Panc1 (cell line): ENCODE measurements at regions of chr17 and their contacts with region 1.

Region 1: GRCh38 chr17:50218771-50219315 is 17.4 kb upstream of the COL1A1 start:
- DNase-seq: no peak
- ATAC-seq: peak; percentile 74
- H3K4me3 ChIP-seq: no peak overlapping the region
- H3K27ac ChIP-seq: no peak overlapping the region
- H3K4me1 ChIP-seq: peaks cover 9% of the 10 kb centered on the region; the same call in 1 of the 2 replicates
- H3K27me3 ChIP-seq: no peaks in the 10 kb centered on the region
- CTCF ChIP-seq: no peak

Region 2: GRCh38 chr17:50094753-50095619 is 123.9 kb before region 1 on chr17 and contains the start of gene PDK2:
- CTCF ChIA-PET with region 1: interaction called, 14 read pairs
- POLR2A ChIA-PET with region 1: no interaction called
- in situ Hi-C with region 1: no loop called
- intact Hi-C with region 1: no loop called
- DNase-seq: no peak
- ATAC-seq: peak; percentile 89
- H3K4me3 ChIP-seq: peak within 1 kb of the TSS; percentile 73 to 75
- H3K27ac ChIP-seq: peak within 1 kb of the TSS; percentile 86
- H3K4me1 ChIP-seq: peaks cover 32% of the 10 kb centered on the region
- H3K27me3 ChIP-seq: no peaks in the 10 kb centered on the region
- CTCF ChIP-seq: no peak
- total RNA-seq, gene PDK2: 46.0 TPM

Region 3: GRCh38 chr17:50269477-50270434 is 50.9 kb after region 1 on chr17:
- CTCF ChIA-PET with region 1: interaction called, 9 read pairs
- POLR2A ChIA-PET with region 1: no interaction called
- in situ Hi-C with region 1: loop called (anchors 5 kb)
- intact Hi-C with region 1: no loop called
- DNase-seq: peak; percentile 57
- ATAC-seq: peak; percentile 75
- H3K4me3 ChIP-seq: no peak overlapping the region
- H3K27ac ChIP-seq: no peak overlapping the region
- H3K4me1 ChIP-seq: peaks cover 38% of the 10 kb centered on the region
- H3K27me3 ChIP-seq: no peaks in the 10 kb centered on the region
- CTCF ChIP-seq: peak; percentile 93